ENCODE measurements at regions of chr5 and their contacts with region 1.

Region 1: DNA sequence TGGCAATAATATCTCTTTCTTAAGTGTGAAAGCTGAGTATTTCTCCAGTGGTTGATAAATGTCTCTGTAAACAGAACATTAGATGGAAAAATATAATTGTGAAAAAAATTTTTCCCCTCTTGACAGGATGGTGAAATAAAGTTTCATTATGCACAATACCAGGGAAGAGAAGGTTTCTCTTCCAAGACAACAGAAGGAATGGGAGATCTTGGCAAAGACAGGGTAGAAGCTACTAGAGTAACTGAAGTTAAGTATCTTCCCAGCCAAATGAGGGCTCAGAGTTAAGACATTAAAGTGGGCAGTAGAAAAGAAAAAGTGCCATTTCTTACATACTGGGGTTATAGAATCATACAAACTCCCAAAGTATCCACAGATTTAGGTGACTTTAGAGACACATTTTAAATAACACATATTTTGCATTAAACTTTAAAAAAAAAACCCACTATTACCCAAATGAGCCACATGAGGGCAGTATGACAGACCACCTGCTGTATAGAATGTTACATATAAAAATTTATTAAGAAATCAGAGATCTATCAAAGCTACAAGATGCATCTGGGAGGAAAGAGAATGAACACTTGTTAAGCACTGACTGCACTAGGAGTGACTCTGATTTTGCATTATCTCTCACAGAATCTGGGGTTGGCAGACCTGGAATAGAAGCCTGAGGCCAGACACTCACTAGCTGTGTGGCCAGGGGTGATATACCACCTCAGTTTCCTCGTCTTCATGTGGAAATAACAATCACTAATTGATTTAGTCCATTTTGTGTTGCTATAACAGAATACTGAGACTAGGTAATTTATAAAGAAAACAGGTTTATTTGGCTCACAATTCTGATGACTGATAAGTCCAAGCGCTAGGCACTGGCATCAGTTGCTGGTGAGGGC is 98.5 kb downstream of the ARSB start:
- DNase-seq: peak; percentile 19 to 48 (median 45)
- H3K4me3 ChIP-seq: no peak overlapping the region
- H3K27ac ChIP-seq: no peak overlapping the region
- H3K4me1 ChIP-seq: peaks cover 0 to 12% (median 5%) of the 10 kb centered on the region in 4 experiments
- H3K27me3 ChIP-seq: no peaks in the 10 kb centered on the region

Region 2: GRCh38 chr5:77355080-77355479 is 1531.5 kb before region 1 on chr5:
- CTCF ChIA-PET with region 1: no interaction called
- POLR2A ChIA-PET with region 1: no interaction called
- DNase-seq: no peak
- H3K4me3 ChIP-seq: no peak overlapping the region
- H3K27ac ChIP-seq: no peak overlapping the region
- H3K4me1 ChIP-seq: peaks cover 0 to 3% (median under 1%) of the 10 kb centered on the region in 4 experiments
- H3K27me3 ChIP-seq: no peaks in the 10 kb centered on the region

Region 3: DNA sequence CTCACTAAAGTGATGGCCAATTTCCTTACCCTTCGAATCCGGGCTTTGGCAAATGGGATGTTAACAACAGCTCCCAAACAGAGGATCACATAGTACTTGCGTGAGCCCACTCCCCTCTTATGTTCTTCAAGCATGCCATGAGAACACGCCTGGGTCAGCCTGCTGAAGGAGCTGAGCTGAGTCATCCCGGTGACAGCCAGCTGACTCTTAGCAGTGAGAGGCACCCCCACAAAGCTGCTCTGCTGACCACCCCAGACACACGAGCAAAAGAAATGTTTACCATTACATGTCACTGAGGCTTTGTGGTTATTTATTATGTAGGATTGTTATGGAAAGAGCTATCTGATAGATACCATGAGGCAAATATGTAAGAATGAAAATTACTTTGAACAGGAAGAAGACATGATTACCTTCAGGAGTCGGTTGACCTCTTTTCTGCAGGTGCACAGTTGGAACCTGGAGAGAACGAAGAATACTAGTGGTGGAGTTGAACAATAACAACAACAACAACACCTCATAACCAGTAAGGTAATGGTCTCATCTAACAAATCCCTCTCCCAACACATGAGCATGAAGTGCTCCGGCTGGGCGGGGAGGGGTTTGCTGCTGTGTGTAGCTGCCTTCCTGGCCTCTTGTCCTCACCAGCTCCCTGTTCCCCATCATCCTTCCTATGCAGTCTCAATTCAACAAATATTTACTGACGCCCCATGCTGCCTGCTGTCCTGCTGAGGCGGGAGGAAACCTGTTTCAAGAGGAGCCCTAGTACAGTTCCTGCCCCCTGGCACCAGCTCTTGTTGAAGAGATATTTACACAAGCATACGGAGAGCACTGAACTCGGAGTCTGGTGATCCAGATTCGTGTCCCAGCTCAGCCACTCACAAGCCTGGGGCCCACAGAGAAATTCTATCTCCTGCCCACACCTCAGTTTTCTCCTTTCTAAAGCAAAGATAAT is 168.6 kb before region 1 on chr5:
- CTCF ChIA-PET with region 1: no interaction called
- POLR2A ChIA-PET with region 1: no interaction called
- DNase-seq: no peak
- H3K4me3 ChIP-seq: no peak overlapping the region
- H3K27ac ChIP-seq: no peak overlapping the region
- H3K4me1 ChIP-seq: peaks cover 0 to 8% (median 3%) of the 10 kb centered on the region in 4 experiments
- H3K27me3 ChIP-seq: no peaks in the 10 kb centered on the region

Region 4: GRCh38 chr5:78845487-78845886 is 41.1 kb before region 1 on chr5:
- CTCF ChIA-PET with region 1: no interaction called
- POLR2A ChIA-PET with region 1: no interaction called
- DNase-seq: no peak
- H3K4me3 ChIP-seq: no peak overlapping the region
- H3K27ac ChIP-seq: no peak overlapping the region
- H3K4me1 ChIP-seq: no peaks in the 10 kb centered on the region
- H3K27me3 ChIP-seq: no peaks in the 10 kb centered on the region

Region 5: DNA sequence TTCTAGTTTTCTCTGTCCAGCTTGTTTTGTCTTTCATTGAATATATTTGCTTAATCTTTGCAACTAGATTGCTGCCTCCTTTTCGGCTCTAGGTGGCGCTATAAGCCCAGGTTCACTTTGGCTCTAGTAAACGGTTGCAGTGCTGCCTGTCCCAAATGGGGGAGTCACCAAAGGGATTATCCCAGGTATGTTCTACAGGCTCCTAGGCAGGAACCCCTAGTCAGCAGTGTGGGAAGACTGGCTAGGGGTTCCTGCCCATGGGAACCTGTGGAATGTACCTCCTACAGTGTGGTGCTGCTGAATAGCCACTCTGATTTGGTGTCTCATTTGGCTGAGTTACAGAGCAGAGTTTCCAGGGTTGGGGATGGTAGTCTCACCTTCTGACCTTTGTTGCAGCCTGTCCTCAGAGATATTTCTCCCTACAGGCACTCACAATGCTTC is 13.4 kb after region 1 on chr5:
- CTCF ChIA-PET with region 1: interaction called, 20 read pairs
- POLR2A ChIA-PET with region 1: no interaction called
- DNase-seq: peak in 1 of 3 donors; percentile 29
- H3K4me3 ChIP-seq: no peak overlapping the region
- H3K27ac ChIP-seq: no peak overlapping the region
- H3K4me1 ChIP-seq: peaks cover 0 to 15% (median under 1%) of the 10 kb centered on the region in 4 experiments
- H3K27me3 ChIP-seq: no peaks in the 10 kb centered on the region

Region 6: GRCh38 chr5:78964887-78965286 is 78.3 kb after region 1 on chr5:
- CTCF ChIA-PET with region 1: interaction called, 42 read pairs
- POLR2A ChIA-PET with region 1: no interaction called
- DNase-seq: peak; percentile 65 to 80 (median 74)
- H3K4me3 ChIP-seq: no peak overlapping the region
- H3K27ac ChIP-seq: no peak overlapping the region
- H3K4me1 ChIP-seq: no peaks in the 10 kb centered on the region
- H3K27me3 ChIP-seq: no peaks in the 10 kb centered on the region